ENCODE measurements at regions of chr11 and their contacts with region 1.

Region 1: GRCh38 chr11:72430741-72431570 is 3.4 kb downstream of the CLPB start:
- DNase-seq: peak; percentile 47
- H3K4me3 Mint-ChIP-seq: no peak overlapping the region
- H3K27ac Mint-ChIP-seq: peak overlapping the region; percentile 13
- H3K4me1 Mint-ChIP-seq: peaks cover 43% of the 10 kb centered on the region
- H3K27me3 Mint-ChIP-seq: no peaks in the 10 kb centered on the region

Region 2: GRCh38 chr11:72024069-72024754 is 406.7 kb before region 1 on chr11:
- CTCF ChIA-PET with region 1: interaction called, 12 read pairs
- POLR2A ChIA-PET with region 1: no interaction called
- DNase-seq: no peak
- H3K4me3 Mint-ChIP-seq: no peak overlapping the region
- H3K27ac Mint-ChIP-seq: no peak overlapping the region
- H3K4me1 Mint-ChIP-seq: peaks cover 17% of the 10 kb centered on the region
- H3K27me3 Mint-ChIP-seq: no peaks in the 10 kb centered on the region

Region 3: DNA sequence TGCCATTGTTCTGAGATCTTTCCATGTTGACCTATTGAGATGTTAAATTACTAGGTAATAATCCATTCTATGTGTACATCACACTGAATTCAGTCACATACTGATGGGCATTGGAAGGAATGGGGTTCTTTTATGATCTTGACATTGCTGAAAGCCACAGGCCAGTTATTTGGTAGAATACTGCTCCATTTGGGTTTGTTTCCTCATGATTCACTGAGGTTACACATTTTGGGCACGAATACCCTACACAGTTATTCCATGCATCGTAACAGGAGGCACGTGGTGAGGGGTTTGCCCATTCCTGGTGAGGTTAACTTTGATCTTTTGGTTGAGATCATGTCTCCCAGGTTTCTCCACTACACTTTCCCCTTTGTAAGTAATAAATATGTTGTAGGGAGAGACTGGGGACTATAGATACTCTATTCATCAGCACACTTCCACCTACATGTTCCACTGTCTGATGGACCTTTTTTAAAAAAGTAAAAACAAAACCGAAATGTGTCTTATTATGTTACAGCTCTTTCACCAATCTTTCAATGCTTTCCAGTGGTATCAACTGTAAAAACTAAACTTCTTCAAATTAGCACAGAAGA is 251.1 kb before region 1 on chr11:
- CTCF ChIA-PET with region 1: interaction called, 11 read pairs
- POLR2A ChIA-PET with region 1: no interaction called
- DNase-seq: no peak
- H3K4me3 Mint-ChIP-seq: no peak overlapping the region
- H3K27ac Mint-ChIP-seq: no peak overlapping the region
- H3K4me1 Mint-ChIP-seq: peaks cover 10% of the 10 kb centered on the region
- H3K27me3 Mint-ChIP-seq: peaks cover 13% of the 10 kb centered on the region

Region 4: DNA sequence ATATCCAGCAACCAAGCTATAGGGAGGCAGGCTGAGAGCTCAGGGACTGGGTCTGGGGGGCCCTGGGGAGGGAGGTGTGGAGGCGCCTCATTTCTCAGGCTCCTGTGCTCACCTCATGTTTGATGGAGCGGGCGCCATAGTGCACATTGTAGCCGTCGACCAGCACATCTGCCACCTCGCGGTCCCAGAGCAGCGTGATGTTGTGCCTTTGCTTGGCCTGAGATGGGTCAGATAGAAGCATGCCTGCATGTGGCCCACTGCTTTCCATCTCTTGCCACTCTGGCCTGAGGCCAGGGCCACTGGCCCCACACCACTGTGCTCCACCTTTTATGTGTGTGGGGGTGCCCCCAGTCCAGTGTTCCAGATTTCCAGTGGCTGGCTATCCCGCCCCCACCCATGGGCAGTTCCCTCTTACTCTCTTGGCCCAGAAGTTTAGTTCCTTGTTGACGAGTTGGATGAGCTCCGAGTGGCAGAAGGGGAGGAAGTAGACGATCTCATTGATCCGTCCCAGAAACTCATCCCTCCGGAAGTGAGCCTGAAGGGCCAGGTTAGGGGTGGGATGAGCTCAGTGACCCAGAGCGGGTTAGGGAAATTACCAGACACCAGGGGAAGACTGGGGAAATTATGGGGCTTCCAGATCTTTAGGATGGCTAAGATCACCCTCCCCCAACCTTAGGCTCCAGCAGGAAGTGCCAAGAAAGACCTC is 136.9 kb before region 1 on chr11:
- CTCF ChIA-PET with region 1: interaction called, 19 read pairs
- POLR2A ChIA-PET with region 1: interaction called, 3 read pairs
- DNase-seq: no peak
- H3K4me3 Mint-ChIP-seq: no peak overlapping the region
- H3K27ac Mint-ChIP-seq: no peak overlapping the region
- H3K4me1 Mint-ChIP-seq: no peaks in the 10 kb centered on the region
- H3K27me3 Mint-ChIP-seq: no peaks in the 10 kb centered on the region

Region 5: DNA sequence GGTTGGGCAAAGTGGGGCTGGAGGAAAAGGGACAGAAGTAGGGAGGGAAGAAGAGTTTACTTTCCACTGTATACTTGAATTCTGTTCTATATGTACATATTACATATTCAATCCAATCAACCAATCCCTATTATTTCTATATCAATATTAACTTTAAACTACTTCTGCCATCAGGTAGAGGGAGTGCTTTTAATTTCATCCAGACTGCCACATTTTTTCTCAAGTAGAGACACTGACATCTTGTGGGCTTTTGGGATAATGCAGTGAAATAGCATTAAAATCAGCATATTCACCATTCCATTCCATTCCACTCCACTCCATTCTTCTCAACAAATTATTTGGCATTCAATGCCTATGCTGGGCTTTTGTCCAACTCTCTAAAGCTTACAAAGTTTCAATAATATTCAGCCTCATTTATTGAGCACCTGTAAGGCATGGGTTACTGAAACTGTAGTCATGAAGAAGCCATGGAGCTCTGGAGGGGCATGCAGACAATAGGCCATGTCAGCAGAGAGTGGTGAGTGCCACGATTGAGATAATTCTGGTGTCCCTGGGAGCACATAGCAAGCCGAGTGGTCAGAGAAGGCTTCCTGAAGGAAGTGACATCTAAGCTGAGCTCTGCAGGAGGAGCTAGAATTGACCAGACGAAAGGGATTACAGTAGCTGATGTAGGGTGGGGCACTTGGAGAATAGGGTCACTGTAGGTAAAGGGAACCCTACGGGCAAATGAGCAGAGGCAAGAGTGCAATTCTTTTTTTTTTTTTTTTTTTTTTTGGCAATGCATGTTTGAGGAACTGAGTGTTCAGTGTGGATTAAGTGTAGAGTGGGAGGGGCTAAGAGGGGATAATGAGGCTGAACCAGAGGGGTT is 16.2 kb after region 1 on chr11:
- CTCF ChIA-PET with region 1: interaction called, 21 read pairs
- POLR2A ChIA-PET with region 1: no interaction called
- DNase-seq: no peak
- H3K4me3 Mint-ChIP-seq: no peak overlapping the region
- H3K27ac Mint-ChIP-seq: no peak overlapping the region
- H3K4me1 Mint-ChIP-seq: no peaks in the 10 kb centered on the region
- H3K27me3 Mint-ChIP-seq: peaks cover 24% of the 10 kb centered on the region

Region 6: DNA sequence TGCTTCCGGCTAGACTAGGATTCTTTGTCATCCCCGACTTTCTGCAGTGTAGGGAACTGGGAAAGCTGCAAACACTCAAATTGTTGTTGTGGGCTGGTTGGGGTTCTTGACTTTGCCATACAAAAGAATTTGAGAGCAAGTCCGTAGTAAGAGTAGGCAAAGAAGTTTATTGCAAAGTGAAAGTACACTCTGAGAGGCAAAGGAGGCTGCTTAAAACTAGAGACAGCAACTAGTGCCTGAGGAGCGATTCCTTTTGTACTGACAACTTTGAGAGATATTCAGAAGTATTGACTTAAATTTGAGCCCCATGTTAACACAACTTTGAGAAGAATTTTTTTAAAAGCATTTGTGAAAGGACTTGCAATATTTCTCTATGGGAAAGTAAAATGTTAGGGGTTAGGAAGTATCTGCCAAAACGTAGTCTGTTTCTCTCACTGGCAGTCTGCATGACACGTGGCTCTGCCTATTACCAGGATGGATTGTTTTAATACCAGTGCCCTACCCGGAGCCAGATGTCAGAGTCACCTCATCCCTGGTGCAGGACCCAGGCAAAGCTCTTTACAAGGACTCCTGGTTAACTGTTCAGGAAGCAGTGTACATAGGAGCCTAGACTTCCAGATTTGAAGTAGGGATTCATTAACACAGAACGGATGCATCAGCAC is 88.4 kb after region 1 on chr11:
- CTCF ChIA-PET with region 1: no interaction called
- POLR2A ChIA-PET with region 1: no interaction called
- DNase-seq: peak; percentile 41
- H3K4me3 Mint-ChIP-seq: peak overlapping the region; percentile 72
- H3K27ac Mint-ChIP-seq: peak overlapping the region; percentile 94
- H3K4me1 Mint-ChIP-seq: peaks cover 25% of the 10 kb centered on the region
- H3K27me3 Mint-ChIP-seq: peaks cover 11% of the 10 kb centered on the region